ENCODE measurements at regions of chr22 and their contacts with region 1.

Region 1: GRCh38 chr22:32144496-32145274 is 14.4 kb downstream of the C22orf42 start:
- H3K4me3 ChIP-seq: no peak overlapping the region
- H3K27ac ChIP-seq: no peak overlapping the region
- H3K4me1 ChIP-seq: no peaks in the 10 kb centered on the region
- CTCF ChIP-seq: no peak

Region 2: GRCh38 chr22:31983911-31984656 is 160.6 kb before region 1 on chr22:
- CTCF ChIA-PET with region 1: no interaction called
- POLR2A ChIA-PET with region 1: no interaction called
- H3K4me3 ChIP-seq: no peak overlapping the region
- H3K27ac ChIP-seq: no peak overlapping the region
- H3K4me1 ChIP-seq: no peaks in the 10 kb centered on the region
- CTCF ChIP-seq: no peak

Region 3: GRCh38 chr22:32123657-32124056 is 21.0 kb before region 1 on chr22:
- CTCF ChIA-PET with region 1: interaction called, 14 read pairs
- POLR2A ChIA-PET with region 1: no interaction called
- H3K4me3 ChIP-seq: no peak overlapping the region
- H3K27ac ChIP-seq: no peak overlapping the region
- H3K4me1 ChIP-seq: no peaks in the 10 kb centered on the region
- CTCF ChIP-seq: 0 out of 2 replicates have a peak, but pooled peaks have one; percentile 11

Measured in HEK293 (cell line).